Activated B cell treated with CpG ODN at 0.5 μM for 24 hours (primary cell): ENCODE measurements at regions of chr17 and their contacts with region 1.

Region 1: GRCh38 chr17:49763735-49764558 is at the start of gene FAM117A:
- DNase-seq: peak; percentile 83
- ATAC-seq: peak; percentile 92
- H3K4me3 Mint-ChIP-seq: peak within 1 kb of the TSS; percentile 94
- H3K27ac Mint-ChIP-seq: peak within 1 kb of the TSS; percentile 79
- H3K4me1 Mint-ChIP-seq: peaks cover 57% of the 10 kb centered on the region
- H3K27me3 Mint-ChIP-seq: no peaks in the 10 kb centered on the region
- CTCF ChIP-seq: no peak
- total RNA-seq, gene FAM117A: 27.7 and 30.0 TPM in 2 replicates

Region 2: GRCh38 chr17:49687878-49688491 is 76.0 kb before region 1 on chr17:
- CTCF ChIA-PET with region 1: no interaction called
- POLR2A ChIA-PET with region 1: no interaction called
- intact Hi-C with region 1: no loop called
- DNase-seq: no peak
- ATAC-seq: peak; percentile 45
- H3K4me3 Mint-ChIP-seq: peak overlapping the region; percentile 12
- H3K27ac Mint-ChIP-seq: peak overlapping the region; percentile 59
- H3K4me1 Mint-ChIP-seq: peaks cover 13% of the 10 kb centered on the region
- H3K27me3 Mint-ChIP-seq: no peaks in the 10 kb centered on the region
- CTCF ChIP-seq: no peak

Region 3: DNA sequence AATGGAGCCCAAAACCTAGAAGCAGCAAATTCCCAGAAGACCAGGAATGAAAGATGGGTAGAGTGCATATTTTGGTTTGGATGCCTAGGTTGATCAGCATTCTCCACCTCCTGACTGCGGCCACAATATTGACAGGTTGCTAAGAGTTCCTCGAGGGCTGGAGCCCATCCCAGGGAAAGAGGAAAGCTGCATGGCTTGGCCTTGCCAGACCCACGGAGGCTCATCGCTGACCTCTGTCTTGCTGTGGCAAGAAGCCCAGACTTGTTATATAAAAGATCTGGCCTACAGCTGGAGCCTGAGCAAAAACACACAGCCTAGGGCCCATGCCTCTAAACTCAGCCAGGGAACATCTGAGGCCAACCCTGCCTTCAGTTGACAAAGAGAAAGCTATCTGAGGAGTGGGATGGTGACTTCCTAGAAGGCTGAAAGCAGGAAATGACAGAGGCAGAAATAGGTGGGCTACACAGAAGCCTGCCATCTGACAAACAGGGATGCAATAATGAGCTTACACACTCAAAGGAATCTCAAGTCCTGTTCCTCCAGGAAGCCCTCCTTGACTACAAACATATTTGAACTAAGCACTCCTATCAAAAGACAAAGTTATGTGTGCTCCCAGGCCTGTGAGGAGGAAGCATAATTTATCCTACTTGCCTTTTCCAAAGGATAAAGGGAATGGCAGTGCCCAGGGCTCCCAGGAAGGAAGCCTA is 33.7 kb before region 1 on chr17:
- CTCF ChIA-PET with region 1: no interaction called
- POLR2A ChIA-PET with region 1: interaction called, 4 read pairs
- intact Hi-C with region 1: loop called (anchors 5 kb)
- DNase-seq: no peak
- ATAC-seq: no peak
- H3K4me3 Mint-ChIP-seq: no peak overlapping the region
- H3K27ac Mint-ChIP-seq: no peak overlapping the region
- H3K4me1 Mint-ChIP-seq: peaks cover 45% of the 10 kb centered on the region
- H3K27me3 Mint-ChIP-seq: no peaks in the 10 kb centered on the region
- CTCF ChIP-seq: no peak

Region 4: DNA sequence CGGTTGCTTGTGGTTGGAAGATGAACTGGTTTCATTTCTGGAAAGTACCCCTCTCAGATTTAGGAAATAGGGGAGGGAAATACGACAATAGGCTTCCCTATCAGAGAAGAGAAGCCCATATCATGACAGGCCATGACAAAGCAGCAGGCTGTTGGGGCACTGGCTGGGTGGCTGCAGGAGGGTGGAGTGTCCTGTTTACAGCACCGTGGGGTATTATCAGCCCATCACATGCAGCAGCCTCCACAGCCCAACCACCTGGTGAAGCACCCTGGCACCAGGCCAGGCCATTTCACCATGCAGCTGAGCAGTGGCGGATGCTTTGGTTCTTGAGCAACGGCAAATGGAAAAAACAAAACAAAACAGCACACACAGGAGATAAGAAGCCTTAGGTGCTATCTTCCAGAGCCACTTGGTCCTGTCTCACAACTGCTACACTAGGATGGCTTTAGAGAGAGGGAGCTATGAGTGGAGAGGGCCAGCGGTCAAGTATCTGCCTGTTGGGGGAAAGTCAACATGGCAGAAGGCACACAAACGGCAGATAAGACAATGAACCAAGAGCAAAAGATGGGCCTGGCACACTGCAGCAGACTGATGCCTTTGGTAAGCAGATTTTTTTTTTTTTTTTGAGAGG is 24.2 kb before region 1 on chr17:
- CTCF ChIA-PET with region 1: interaction called, 4 read pairs
- POLR2A ChIA-PET with region 1: interaction called, 93 read pairs
- intact Hi-C with region 1: loop called (anchors 1 kb)
- DNase-seq: peak; percentile 75
- ATAC-seq: peak; percentile 91
- H3K4me3 Mint-ChIP-seq: peak overlapping the region; percentile 81
- H3K27ac Mint-ChIP-seq: peak overlapping the region; percentile 99
- H3K4me1 Mint-ChIP-seq: peaks cover 87% of the 10 kb centered on the region
- H3K27me3 Mint-ChIP-seq: no peaks in the 10 kb centered on the region
- CTCF ChIP-seq: no peak

Region 5: DNA sequence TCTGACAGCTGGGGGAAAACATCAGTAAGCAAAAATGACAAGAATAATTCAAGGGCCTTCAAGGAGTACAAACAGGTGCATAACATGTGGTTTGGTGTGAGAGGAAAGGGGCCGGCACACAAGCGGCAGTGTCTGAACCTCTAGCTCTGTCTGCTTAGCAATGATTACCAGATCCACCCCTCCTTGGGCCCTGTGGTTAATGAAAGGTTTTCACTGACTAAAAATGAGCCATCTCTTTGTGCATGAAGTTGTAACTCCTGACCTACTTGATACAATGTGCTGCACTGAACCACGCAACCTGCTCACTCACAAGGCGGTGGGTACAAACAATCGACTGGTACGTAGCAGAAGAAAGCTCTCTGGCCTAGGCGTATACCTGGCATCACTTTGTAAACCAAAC is 15.2 kb before region 1 on chr17:
- CTCF ChIA-PET with region 1: interaction called, 15 read pairs
- POLR2A ChIA-PET with region 1: interaction called, 129 read pairs
- intact Hi-C with region 1: loop called (anchors 1 kb)
- DNase-seq: no peak
- ATAC-seq: peak; percentile 72
- H3K4me3 Mint-ChIP-seq: peak overlapping the region; percentile 64
- H3K27ac Mint-ChIP-seq: peak overlapping the region; percentile 96
- H3K4me1 Mint-ChIP-seq: peaks cover 83% of the 10 kb centered on the region
- H3K27me3 Mint-ChIP-seq: no peaks in the 10 kb centered on the region
- CTCF ChIP-seq: no peak

Region 6: DNA sequence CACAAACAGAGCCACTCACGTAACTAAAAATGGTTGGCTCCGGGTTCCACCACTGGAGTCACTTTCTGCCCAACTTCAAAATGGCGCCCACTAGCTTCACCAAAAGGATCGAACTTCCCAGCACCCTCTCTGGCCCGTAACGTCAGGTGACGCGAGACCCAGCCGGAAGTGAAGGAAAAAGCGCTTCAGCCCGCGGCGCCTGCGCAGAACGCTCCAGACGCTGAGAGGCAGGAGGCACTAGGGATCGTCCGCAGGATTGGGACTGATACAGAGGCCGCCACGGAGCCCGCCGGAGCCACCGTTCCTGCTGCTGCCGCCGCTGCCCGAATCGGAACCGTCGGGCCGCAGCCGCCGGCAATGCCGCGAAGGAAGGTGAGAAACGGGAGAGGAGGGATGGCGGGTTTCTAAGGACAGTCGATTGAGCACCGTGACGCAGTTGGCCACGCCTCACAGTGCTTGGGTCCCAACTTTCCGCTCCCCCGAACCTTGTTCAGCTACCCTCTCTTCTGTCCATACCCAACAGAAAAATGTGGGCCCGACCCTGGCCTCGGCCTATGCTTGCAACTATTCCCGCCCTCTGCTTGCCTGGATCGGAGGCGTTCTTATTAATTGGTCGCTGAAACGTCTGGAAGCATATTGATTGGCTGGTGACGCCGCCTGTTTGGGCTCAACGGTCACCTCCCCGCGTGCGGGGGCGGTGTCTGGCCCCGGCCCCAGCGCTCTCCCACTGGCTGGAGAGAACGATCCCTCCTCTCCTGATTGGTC is 24.7 kb after region 1 on chr17 and contains the start of gene KAT7:
- CTCF ChIA-PET with region 1: no interaction called
- POLR2A ChIA-PET with region 1: interaction called, 55 read pairs
- intact Hi-C with region 1: loop called (anchors 1 kb)
- DNase-seq: peak; percentile 90
- ATAC-seq: peak; percentile 86
- H3K4me3 Mint-ChIP-seq: peak within 1 kb of the TSS; percentile 94
- H3K27ac Mint-ChIP-seq: peak within 1 kb of the TSS; percentile 96
- H3K4me1 Mint-ChIP-seq: peaks cover 42% of the 10 kb centered on the region
- H3K27me3 Mint-ChIP-seq: no peaks in the 10 kb centered on the region
- CTCF ChIP-seq: no peak
- total RNA-seq, gene KAT7: 95.0 and 95.8 TPM in 2 replicates

Region 7: DNA sequence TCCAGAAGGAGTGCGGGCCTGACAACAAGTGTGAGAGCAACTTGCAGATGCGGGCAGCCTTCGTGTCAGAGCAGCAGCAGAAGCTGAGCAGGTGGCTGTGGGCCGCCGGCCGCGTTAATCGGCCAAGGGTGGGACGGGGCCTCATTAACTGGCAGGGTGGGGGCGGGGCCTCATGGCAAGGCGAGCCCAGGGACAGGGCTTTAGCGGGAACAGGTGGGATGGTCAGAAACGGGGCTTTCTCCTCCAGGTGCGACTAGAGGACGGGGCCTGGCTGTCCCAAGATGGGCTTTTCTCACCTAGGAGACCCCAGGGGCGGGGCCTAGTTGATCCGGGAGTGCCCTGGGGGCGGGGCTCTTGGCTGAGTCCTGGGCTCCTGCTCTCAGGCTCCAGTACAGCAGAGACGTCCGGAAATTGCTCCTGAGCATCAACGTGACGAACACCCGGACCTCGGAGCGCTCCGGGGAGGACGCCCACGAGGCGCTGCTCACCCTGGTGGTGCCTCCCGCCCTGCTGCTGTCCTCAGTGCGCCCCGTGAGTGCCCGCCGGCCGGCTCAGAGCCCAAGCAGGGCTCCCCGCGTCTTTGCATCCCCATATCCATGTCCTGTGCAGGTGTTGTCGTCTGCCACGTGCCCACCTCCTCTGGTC is 312.8 kb after region 1 on chr17:
- CTCF ChIA-PET with region 1: no interaction called
- POLR2A ChIA-PET with region 1: no interaction called
- intact Hi-C with region 1: no loop called
- DNase-seq: no peak
- ATAC-seq: no peak
- H3K4me3 Mint-ChIP-seq: no peak overlapping the region
- H3K27ac Mint-ChIP-seq: no peak overlapping the region
- H3K4me1 Mint-ChIP-seq: peaks cover 24% of the 10 kb centered on the region
- H3K27me3 Mint-ChIP-seq: no peaks in the 10 kb centered on the region
- CTCF ChIP-seq: no peak

Region 8: DNA sequence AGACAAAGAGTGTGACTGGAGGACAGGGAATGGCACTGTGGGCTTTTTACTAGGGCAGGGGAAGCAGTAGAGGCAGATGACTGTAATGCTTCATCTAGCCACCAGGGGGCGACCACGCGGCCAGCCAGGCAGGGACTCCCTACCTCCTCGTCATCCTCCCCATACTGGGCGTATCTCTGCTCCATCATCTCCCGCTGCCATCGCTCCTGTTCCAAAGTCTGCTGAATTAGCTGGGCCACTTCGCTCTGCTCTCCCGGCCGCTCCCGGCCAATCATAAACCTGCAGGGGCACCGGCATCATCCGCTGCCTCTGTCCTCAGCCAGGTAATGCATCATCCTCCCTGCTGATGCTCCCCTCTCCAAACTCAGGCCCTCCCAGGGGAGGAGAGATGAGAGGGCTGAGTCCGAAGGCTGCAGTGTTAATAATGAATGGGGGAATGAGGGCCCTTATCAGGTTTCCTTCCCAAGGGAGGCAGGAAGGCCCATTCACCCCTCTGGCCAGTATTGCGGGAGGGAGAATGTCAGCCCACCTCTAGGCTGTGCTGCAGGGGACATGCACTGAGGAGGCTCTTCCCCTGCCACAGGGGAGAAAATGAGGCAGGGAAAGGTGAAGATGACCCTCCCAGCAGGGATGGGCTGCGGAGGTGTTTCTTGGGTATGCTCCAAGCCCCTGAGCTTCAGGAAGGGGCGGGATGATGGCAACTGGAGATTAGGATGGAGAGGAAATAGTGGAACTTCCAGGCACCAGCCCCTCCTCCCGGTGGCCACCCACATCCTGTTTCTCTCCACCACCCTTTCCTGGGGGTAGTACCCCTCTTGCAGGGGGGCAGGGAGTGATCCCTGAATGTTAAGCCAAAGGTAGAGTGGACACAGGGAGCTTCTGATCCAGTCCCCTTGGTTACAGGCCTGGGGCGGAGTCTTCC is 376.3 kb after region 1 on chr17:
- CTCF ChIA-PET with region 1: no interaction called
- POLR2A ChIA-PET with region 1: no interaction called
- intact Hi-C with region 1: loop called (anchors 10 kb)
- DNase-seq: peak; percentile 76
- ATAC-seq: peak; percentile 85
- H3K4me3 Mint-ChIP-seq: peak overlapping the region; percentile 41
- H3K27ac Mint-ChIP-seq: peak overlapping the region; percentile 70
- H3K4me1 Mint-ChIP-seq: peaks cover 63% of the 10 kb centered on the region
- H3K27me3 Mint-ChIP-seq: no peaks in the 10 kb centered on the region
- CTCF ChIP-seq: peak; percentile 43